Activated B cell treated with CpG ODN at 0.5 μM for 24 hours (primary cell): ENCODE measurements at regions of chr17 and their contacts with region 1.

Region 1: DNA sequence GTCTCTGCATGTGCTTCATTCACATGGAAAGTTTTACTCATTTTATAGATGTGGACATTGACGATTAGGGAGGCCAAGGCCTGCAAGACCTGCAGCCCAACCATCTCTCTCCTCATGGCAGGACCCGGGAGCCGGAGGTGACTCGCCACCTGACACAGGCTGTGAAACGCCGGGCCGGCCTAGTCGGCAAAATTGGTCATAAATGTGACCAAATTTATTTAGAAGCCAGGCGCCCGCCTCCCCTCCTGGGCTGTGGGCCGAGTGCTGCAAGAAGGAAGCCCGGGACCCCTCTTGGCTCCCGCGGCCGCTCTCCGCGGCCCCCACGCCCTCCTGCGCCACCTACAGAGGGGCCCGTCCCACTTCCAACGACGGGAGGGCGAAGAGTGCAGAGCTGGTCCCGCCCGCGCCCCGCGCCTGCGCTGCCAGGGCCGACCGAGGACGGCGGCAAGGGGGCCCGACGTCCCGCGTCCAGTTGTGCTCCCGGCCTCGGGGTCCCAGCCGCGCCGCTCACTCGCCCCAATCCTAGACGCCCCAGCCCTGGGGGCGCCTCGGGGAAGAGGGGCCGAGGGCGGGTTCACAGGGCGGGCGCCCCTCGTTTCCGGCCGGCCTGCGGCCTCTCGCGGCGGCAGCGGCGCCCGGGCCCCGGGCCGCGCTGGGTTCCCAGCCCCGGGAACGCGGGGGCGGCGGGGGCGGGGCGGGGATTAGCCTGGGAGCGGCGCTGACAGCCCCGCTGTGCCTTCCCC is 47.5 kb downstream of the WNT3 start:
- DNase-seq: peak; percentile 63
- ATAC-seq: peak; percentile 81
- H3K4me3 Mint-ChIP-seq: peak overlapping the region; percentile 74
- H3K27ac Mint-ChIP-seq: no peak overlapping the region
- H3K4me1 Mint-ChIP-seq: peaks cover 32% of the 10 kb centered on the region
- H3K27me3 Mint-ChIP-seq: no peaks in the 10 kb centered on the region
- CTCF ChIP-seq: no peak

Region 2: DNA sequence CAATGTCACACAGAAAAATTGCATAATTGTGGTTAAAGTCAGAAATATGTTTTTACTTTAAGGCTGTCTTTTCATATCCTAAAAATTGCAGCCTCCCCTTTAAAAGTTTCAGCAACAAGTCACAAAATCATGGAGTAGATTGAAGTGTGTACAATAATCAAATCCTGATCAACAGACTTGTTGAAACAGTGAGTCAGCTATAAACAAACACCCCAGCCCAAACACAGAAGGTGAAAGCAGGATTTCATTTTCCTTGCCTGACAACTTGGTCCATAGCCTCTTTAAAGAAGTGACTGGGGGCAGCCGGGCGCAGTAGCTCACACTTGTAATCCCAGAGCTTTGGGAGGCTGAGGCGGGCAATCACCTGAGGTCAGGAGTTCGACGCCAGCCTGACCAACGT is 12.4 kb before region 1 on chr17:
- CTCF ChIA-PET with region 1: no interaction called
- POLR2A ChIA-PET with region 1: no interaction called
- intact Hi-C with region 1: no loop called
- DNase-seq: no peak
- ATAC-seq: no peak
- H3K4me3 Mint-ChIP-seq: no peak overlapping the region
- H3K27ac Mint-ChIP-seq: no peak overlapping the region
- H3K4me1 Mint-ChIP-seq: peaks cover 13% of the 10 kb centered on the region
- H3K27me3 Mint-ChIP-seq: no peaks in the 10 kb centered on the region
- CTCF ChIP-seq: no peak

Region 3: GRCh38 chr17:46783031-46783593 is 12.1 kb after region 1 on chr17:
- CTCF ChIA-PET with region 1: no interaction called
- POLR2A ChIA-PET with region 1: no interaction called
- intact Hi-C with region 1: loop called (anchors 1 kb)
- DNase-seq: no peak
- ATAC-seq: no peak
- H3K4me3 Mint-ChIP-seq: no peak overlapping the region
- H3K27ac Mint-ChIP-seq: no peak overlapping the region
- H3K4me1 Mint-ChIP-seq: peaks cover 3% of the 10 kb centered on the region
- H3K27me3 Mint-ChIP-seq: no peaks in the 10 kb centered on the region
- CTCF ChIP-seq: no peak

Region 4: GRCh38 chr17:46818319-46818928 is 47.4 kb after region 1 on chr17 and contains the start of gene WNT3:
- CTCF ChIA-PET with region 1: no interaction called
- POLR2A ChIA-PET with region 1: no interaction called
- intact Hi-C with region 1: loop called (anchors 5 kb)
- DNase-seq: peak; percentile 51
- ATAC-seq: peak; percentile 84
- H3K4me3 Mint-ChIP-seq: peak within 1 kb of the TSS; percentile 81
- H3K27ac Mint-ChIP-seq: no peak within 1 kb of the TSS
- H3K4me1 Mint-ChIP-seq: peaks cover 36% of the 10 kb centered on the region
- H3K27me3 Mint-ChIP-seq: peaks cover 71% of the 10 kb centered on the region
- CTCF ChIP-seq: no peak
- total RNA-seq, gene WNT3: 1.0 and 1.3 TPM in 2 replicates

Region 5: DNA sequence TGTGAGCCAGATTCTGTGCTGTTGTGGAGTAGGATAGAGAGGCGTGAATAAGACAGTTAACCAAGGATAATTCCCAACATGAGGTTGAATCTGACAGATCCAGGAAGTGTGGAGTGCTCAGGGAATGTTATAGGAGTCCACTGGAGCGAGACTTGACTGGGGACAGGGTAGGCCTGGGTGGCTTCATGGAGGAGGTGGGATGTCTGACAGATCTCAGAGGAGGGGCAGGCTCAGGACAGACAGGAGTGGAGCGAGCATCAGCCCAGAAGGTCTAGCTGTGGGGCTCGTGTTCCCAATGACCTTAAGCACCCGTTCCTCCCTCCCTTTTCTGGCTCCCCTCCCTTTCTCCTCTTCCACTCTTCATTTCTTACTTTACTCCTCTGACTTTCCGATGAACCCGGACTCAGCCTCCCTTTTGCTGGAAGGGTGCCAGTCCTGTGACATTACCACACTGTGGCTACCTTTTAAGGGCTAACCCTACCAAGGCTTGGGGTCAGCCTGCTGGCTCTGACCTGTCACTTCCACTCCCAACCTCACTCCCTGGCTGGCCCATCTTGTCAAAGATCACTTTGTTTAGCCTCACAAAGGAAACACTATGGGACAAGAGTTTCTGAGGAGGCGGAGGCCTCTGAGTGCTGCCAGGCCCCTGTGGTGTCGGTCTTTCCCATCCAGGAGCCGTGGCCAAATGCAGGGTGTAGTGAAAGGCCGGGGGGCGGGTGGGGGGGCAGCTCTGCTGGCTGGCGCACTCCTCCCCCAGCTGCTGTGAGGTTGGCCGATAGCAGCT is 524.3 kb after region 1 on chr17:
- CTCF ChIA-PET with region 1: no interaction called
- POLR2A ChIA-PET with region 1: no interaction called
- intact Hi-C with region 1: no loop called
- DNase-seq: no peak
- ATAC-seq: no peak
- H3K4me3 Mint-ChIP-seq: no peak overlapping the region
- H3K27ac Mint-ChIP-seq: peak overlapping the region; percentile 74
- H3K4me1 Mint-ChIP-seq: peaks cover 25% of the 10 kb centered on the region
- H3K27me3 Mint-ChIP-seq: no peaks in the 10 kb centered on the region
- CTCF ChIP-seq: no peak